ENCODE measurements at regions of chr15 and their contacts with region 1.

Region 1: DNA sequence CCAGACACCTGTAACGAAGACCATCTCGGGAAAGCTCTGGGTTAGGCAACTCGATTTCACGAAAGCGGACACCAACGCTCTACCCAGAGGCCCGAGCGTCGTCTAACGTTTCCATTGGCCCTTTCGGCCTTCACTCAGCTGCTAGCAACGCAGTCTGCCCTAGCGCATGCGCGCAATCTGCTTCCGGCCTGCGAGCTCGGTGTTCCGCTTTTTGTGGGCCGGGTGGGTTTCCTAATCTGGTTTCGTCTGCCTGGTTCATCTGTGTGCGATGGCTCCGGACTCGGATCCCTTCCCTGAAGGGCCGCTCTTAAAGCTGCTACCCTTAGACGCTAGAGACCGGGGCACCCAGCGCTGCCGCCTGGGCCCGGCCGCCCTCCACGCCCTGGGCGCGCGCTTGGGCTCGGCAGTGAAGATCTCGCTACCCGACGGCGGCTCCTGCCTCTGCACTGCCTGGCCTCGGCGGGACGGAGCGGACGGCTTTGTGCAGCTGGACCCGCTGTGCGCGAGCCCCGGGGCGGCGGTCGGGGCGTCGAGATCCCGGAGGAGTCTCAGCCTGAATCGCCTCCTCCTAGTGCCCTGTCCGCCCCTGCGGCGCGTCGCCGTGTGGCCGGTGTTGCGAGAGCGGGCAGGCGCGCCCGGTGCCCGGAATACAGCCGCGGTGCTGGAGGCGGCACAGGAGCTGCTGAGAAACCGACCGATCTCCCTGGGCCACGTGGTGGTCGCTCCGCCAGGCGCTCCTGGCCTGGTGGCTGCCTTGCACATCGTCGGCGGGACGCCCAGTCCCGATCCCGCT is 24.0 kb upstream of the GATM start:
- H3K4me3 ChIP-seq: peak overlapping the region; percentile 95
- H3K27ac ChIP-seq: peak overlapping the region; percentile 70
- H3K4me1 ChIP-seq: no peaks in the 10 kb centered on the region
- CTCF ChIP-seq: no peak

Region 2: DNA sequence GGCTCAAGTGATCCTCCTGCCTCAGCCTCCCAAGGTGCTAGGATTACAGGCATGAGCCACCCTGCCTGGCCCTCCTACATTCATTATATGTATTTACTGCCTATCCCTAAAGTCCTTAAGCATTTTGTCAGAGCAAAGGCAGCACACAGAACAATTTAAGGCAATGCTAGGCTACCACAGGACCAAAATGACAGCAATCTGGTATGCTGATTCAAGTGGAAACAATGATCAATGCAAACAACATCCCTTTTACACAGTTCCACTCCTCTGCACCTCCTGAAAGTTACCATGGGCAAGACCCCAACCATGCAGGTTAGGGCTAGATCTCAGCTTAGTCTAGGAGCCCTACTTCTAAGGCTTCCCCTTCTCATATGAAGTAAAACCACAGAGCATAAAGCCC is 779.2 kb before region 1 on chr15:
- CTCF ChIA-PET with region 1: no interaction called
- POLR2A ChIA-PET with region 1: no interaction called
- H3K4me3 ChIP-seq: no peak overlapping the region
- H3K27ac ChIP-seq: no peak overlapping the region
- H3K4me1 ChIP-seq: no peaks in the 10 kb centered on the region
- CTCF ChIP-seq: no peak

Region 3: GRCh38 chr15:45166834-45167630 is 235.3 kb before region 1 on chr15:
- CTCF ChIA-PET with region 1: interaction called, 16 read pairs
- POLR2A ChIA-PET with region 1: interaction called, 7 read pairs
- H3K4me3 ChIP-seq: peak overlapping the region; percentile 42
- H3K27ac ChIP-seq: peak overlapping the region; percentile 95
- H3K4me1 ChIP-seq: 0 out of 2 replicates have a peak, but pooled peaks cover 2% of the 10 kb centered on the region
- CTCF ChIP-seq: peak; percentile 66

Region 4: DNA sequence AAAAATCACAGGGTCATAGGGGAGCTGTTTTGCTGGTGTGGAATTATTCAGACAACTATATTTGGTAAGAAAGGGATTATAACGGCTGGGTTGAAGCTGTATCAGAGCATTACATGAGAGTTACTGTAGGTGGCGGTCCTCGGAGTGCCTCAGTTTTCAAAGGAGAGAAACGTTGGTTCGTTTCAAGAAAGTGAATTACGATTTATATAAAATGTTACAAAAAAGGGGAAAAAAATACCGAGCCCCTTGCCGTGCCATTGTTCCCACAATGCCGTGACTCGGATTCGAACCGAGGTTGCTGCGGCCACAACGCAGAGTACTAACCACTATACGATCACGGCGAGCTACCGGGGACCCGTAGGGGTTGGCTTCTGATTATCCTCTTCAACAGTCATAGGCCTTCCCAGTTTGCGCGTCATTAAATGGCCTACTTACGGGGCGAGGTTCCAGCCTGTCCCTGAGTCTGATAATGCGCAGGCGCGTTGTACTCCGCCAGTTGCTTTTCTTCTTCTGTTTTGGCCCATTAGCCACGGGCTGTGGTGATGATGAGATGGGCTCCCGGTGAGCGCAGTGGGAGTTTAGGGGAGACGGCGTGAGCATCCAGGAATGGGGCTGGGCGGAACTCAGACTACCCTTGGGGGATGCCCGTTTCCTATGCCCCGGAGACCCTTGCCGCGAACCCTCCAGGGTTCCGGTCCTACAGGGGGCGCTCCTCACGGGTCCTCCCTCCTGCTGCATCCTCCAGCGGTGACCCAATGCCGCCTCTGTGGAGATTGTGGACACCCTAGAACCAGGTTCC is 203.8 kb before region 1 on chr15:
- CTCF ChIA-PET with region 1: interaction called, 57 read pairs
- POLR2A ChIA-PET with region 1: interaction called, 14 read pairs
- H3K4me3 ChIP-seq: peak overlapping the region; percentile 90
- H3K27ac ChIP-seq: peak overlapping the region; percentile 28; the same call in 1 of the 2 replicates
- H3K4me1 ChIP-seq: no peaks in the 10 kb centered on the region
- CTCF ChIP-seq: peak; percentile 92

Region 5: DNA sequence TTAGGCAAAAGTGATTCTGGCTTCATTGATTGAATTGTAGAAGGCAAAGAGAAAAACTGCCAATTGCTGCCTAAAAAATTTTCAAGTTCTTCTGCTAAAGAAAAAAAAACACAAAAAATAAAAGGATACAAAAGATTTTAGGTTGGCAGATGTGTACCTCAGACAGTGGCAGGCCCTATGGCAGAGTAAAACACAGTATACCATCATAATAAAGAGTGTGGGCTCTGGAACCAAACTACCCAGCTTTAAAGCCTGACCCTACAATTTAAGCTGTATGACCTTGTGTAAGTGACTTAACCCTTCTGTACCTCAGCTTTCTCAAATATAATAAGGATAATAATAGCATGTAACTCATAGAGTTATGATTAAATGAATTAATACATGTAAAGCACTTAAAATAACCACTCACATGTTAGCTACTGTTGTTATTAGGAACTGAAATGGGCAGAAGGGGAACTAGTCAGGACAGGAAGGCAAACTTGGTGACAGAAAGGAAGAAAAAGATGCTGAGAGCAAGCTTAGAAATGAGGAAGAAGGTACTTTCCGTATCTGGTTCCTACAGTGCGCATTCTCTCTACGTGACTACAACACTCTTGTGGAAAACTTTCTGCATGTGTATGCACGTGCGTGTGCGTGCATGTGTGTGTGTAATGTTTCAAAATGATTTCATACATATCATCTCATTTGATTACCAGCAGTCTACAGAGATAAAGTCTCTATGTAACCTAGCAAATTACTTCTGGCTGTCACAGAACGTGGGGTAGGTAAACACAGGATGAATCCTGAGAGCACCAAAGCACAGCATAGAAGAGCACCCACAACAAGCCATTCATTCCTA is 10.4 kb before region 1 on chr15:
- CTCF ChIA-PET with region 1: interaction called, 10 read pairs
- POLR2A ChIA-PET with region 1: interaction called, 5 read pairs
- H3K4me3 ChIP-seq: no peak overlapping the region
- H3K27ac ChIP-seq: no peak overlapping the region
- H3K4me1 ChIP-seq: peaks cover 7% of the 10 kb centered on the region
- CTCF ChIP-seq: no peak

Region 6: GRCh38 chr15:45414215-45414885 is 12.0 kb after region 1 on chr15:
- CTCF ChIA-PET with region 1: interaction called, 4 read pairs
- POLR2A ChIA-PET with region 1: interaction called, 10 read pairs
- H3K4me3 ChIP-seq: no peak overlapping the region
- H3K27ac ChIP-seq: no peak overlapping the region
- H3K4me1 ChIP-seq: no peaks in the 10 kb centered on the region
- CTCF ChIP-seq: no peak

Region 7: GRCh38 chr15:45594319-45594718 is 192.0 kb after region 1 on chr15:
- CTCF ChIA-PET with region 1: no interaction called
- POLR2A ChIA-PET with region 1: no interaction called
- H3K4me3 ChIP-seq: no peak overlapping the region
- H3K27ac ChIP-seq: no peak overlapping the region
- H3K4me1 ChIP-seq: no peaks in the 10 kb centered on the region
- CTCF ChIP-seq: no peak

Region 8: DNA sequence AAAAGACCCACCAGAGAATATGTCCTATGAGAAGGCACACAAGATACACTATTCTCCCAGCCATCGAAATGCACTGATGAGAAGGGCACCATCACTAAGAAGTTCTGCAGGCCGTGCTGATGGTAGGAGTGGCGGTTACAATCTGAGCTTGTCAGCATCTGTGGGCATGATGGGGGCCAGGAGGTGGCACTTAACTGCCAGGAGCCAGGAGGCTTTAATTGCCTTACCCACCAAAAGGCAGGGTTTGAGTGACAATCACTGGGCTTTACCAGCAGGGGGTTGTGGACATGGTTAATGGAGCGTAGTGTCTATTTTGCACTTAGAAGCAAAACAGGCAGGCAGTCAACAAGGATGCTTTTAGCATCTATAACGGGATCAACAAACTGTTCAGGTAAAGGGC is 216.5 kb after region 1 on chr15:
- CTCF ChIA-PET with region 1: no interaction called
- POLR2A ChIA-PET with region 1: no interaction called
- H3K4me3 ChIP-seq: no peak overlapping the region
- H3K27ac ChIP-seq: no peak overlapping the region
- H3K4me1 ChIP-seq: no peaks in the 10 kb centered on the region
- CTCF ChIP-seq: no peak